Natural killer cell (primary cell): ENCODE measurements at regions of chr2 and their contacts with region 1.

Region 1: GRCh38 chr2:8421658-8422449 is 260.0 kb upstream of the ID2 start:
- DNase-seq: no peak
- ATAC-seq: peak in 1 of 3 donors; percentile 37
- H3K4me3 ChIP-seq: peak overlapping the region; percentile 6
- H3K4me3 Mint-ChIP-seq: peak overlapping the region; percentile 90
- H3K27ac ChIP-seq: peak overlapping the region; percentile 41
- H3K27ac Mint-ChIP-seq: peak overlapping the region; percentile 85 to 95
- H3K4me1 ChIP-seq: peaks cover 65% of the 10 kb centered on the region
- H3K4me1 Mint-ChIP-seq: peaks cover 82 to 91% of the 10 kb centered on the region in 2 donors
- H3K27me3 ChIP-seq: no peaks in the 10 kb centered on the region
- H3K27me3 Mint-ChIP-seq: no peaks in the 10 kb centered on the region
- CTCF ChIP-seq: no peak

Region 2: GRCh38 chr2:8312861-8313830 is 108.7 kb before region 1 on chr2:
- intact Hi-C with region 1: loop called (anchors 5 kb)
- DNase-seq: peak in 1 of 2 donors; percentile 48
- ATAC-seq: peak; percentile 15 to 36 (median 25)
- H3K4me3 ChIP-seq: no peak overlapping the region
- H3K4me3 Mint-ChIP-seq: peak overlapping the region; percentile 82
- H3K27ac ChIP-seq: peak overlapping the region; percentile 81
- H3K27ac Mint-ChIP-seq: peak overlapping the region; percentile 94 to 99
- H3K4me1 ChIP-seq: peaks cover 91% of the 10 kb centered on the region
- H3K4me1 Mint-ChIP-seq: peaks cover 100% of the 10 kb centered on the region in 2 donors
- H3K27me3 ChIP-seq: no peaks in the 10 kb centered on the region
- H3K27me3 Mint-ChIP-seq: no peaks in the 10 kb centered on the region
- CTCF ChIP-seq: no peak

Region 3: DNA sequence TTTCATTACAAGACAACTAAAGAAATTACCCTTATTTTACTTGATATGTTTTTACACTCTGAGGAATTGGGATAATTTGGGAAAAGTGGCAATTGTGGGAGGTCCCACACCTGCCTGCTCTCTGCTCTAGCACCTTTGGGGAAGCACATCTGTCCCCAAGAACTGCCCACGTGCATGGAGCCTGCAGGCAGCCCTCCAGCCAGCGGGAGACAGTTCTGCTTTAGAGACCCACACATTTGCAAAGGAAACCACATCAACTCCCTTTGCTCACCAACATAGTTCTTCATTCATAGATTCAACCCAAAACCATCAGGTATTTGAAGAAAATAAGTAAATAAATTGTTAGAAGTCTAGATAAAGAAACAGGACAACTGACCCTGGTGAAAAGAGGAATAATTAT is 20.1 kb after region 1 on chr2:
- intact Hi-C with region 1: loop called (anchors 2 kb)
- DNase-seq: no peak
- ATAC-seq: peak in 2 of 3 donors; percentile 46 to 57
- H3K4me3 ChIP-seq: no peak overlapping the region
- H3K4me3 Mint-ChIP-seq: peak overlapping the region; percentile 72
- H3K27ac ChIP-seq: no peak overlapping the region
- H3K27ac Mint-ChIP-seq: peak overlapping the region; percentile 81
- H3K4me1 ChIP-seq: peaks cover 43% of the 10 kb centered on the region
- H3K4me1 Mint-ChIP-seq: peaks cover 59 to 60% of the 10 kb centered on the region in 2 donors
- H3K27me3 ChIP-seq: no peaks in the 10 kb centered on the region
- H3K27me3 Mint-ChIP-seq: no peaks in the 10 kb centered on the region
- CTCF ChIP-seq: no peak

Region 4: DNA sequence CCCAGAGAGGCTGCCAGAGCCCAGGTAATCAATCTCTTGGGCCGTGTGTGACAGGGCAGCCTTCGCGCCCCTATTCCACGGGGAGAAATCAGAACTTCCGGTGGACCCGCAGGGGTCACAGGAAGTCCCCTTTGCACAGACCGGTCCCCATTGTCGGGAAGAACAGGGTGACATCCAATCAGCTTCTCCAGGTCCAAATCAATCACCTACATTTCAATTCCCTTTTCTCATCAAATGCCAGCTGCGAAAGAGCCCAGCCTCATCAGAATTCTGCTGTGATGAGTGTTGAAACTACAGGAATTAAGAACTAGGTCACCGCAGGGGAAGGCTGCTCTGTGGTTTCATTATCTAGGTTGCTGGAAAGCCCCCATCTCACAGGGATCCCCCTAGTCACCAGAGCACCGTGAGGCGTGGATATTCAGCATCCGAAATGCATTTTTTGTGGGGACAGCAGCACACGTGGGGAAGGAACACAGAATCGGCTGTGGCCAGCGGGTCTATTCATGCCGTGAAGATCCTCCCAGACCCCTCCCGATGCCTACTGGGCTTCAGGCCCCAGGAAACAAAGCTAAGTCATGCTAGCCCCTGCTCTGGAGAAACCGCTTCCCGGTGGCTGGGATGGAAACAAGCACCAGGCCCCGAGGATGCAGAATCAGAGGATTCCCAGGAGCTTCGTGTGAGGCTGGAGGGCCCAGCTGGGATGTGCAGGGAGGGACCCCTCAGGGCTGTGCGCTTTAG is 66.3 kb after region 1 on chr2:
- intact Hi-C with region 1: loop called (anchors 2 kb)
- DNase-seq: peak; percentile 71 to 93
- ATAC-seq: peak; percentile 81 to 91 (median 91)
- H3K4me3 ChIP-seq: peak overlapping the region; percentile 30
- H3K4me3 Mint-ChIP-seq: peak overlapping the region; percentile 98
- H3K27ac ChIP-seq: peak overlapping the region; percentile 95
- H3K27ac Mint-ChIP-seq: peak overlapping the region; percentile 97 to 100
- H3K4me1 ChIP-seq: peaks cover 59% of the 10 kb centered on the region
- H3K4me1 Mint-ChIP-seq: peaks cover 68 to 69% of the 10 kb centered on the region in 2 donors
- H3K27me3 ChIP-seq: no peaks in the 10 kb centered on the region
- H3K27me3 Mint-ChIP-seq: no peaks in the 10 kb centered on the region
- CTCF ChIP-seq: no peak

Region 5: GRCh38 chr2:8511868-8512612 is 90.2 kb after region 1 on chr2:
- intact Hi-C with region 1: no loop called
- DNase-seq: peak in 1 of 2 donors; percentile 43
- ATAC-seq: peak; percentile 71 to 77 (median 77)
- H3K4me3 ChIP-seq: no peak overlapping the region
- H3K4me3 Mint-ChIP-seq: peak overlapping the region; percentile 68
- H3K27ac ChIP-seq: peak overlapping the region; percentile 92
- H3K27ac Mint-ChIP-seq: peak overlapping the region; percentile 88 to 94
- H3K4me1 ChIP-seq: peaks cover 74% of the 10 kb centered on the region
- H3K4me1 Mint-ChIP-seq: peaks cover 51 to 70% of the 10 kb centered on the region in 2 donors
- H3K27me3 ChIP-seq: no peaks in the 10 kb centered on the region
- H3K27me3 Mint-ChIP-seq: no peaks in the 10 kb centered on the region
- CTCF ChIP-seq: no peak

Region 6: DNA sequence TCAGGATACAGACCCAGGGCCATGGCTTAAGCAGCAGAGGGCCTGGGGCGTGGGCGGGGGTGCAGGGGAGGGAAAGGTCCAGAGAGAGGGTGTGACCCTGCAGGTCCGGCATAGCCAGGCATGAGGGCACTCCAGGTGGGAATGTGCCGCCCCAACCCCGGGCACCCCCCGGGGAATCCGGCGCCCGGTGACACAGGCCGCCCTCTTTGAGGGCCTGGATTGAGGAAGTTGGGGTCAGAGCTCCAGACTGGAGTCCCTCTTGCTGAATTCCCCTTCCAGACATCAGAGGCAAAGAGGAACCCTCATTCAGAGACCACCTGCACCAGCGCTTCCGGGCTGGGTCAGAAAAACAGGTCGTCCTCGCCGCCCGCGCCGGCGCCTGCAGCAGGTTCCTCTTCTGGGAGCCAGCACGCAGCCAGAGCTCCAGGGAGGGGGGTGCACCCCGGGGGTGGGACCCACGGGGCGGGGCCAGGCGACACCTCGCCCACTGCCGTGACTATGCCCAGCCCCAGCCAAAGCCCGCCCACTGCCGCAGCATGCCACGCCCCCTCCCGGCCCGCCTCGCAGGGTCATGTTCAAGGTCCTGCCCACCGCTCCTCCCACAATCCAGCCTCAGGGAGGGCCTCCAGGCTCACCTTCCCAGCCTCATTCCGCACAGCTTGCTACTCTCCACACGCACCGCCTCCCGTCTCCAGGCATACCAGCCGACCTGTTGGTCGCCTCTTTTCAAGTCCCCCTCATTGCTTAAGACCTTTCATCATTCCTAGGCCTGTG is 161.7 kb after region 1 on chr2:
- intact Hi-C with region 1: no loop called
- DNase-seq: peak; percentile 74
- ATAC-seq: peak; percentile 89 to 94 (median 90)
- H3K4me3 ChIP-seq: no peak overlapping the region
- H3K4me3 Mint-ChIP-seq: peak overlapping the region; percentile 78
- H3K27ac ChIP-seq: no peak overlapping the region
- H3K27ac Mint-ChIP-seq: peak overlapping the region in 1 of 2 donors; percentile 35
- H3K4me1 ChIP-seq: peaks cover 58% of the 10 kb centered on the region
- H3K4me1 Mint-ChIP-seq: peaks cover 13 to 42% of the 10 kb centered on the region in 2 donors
- H3K27me3 ChIP-seq: no peaks in the 10 kb centered on the region
- H3K27me3 Mint-ChIP-seq: peaks cover 0 to 6% of the 10 kb centered on the region in 2 donors
- CTCF ChIP-seq: no peak